Activated naive CD4-positive, alpha-beta T cell treated with anti-CD3 and anti-CD28 coated beads for 36 hours (primary cell): ENCODE measurements at regions of chr9 and their contacts with region 1.

Region 1: GRCh38 chr9:36190388-36191287 is at the start of gene CLTA:
- DNase-seq: peak; percentile 98
- H3K4me3 Mint-ChIP-seq: peak within 1 kb of the TSS; percentile 84
- H3K27ac Mint-ChIP-seq: peak within 1 kb of the TSS; percentile 84
- H3K4me1 Mint-ChIP-seq: peaks cover 42% of the 10 kb centered on the region
- H3K27me3 Mint-ChIP-seq: no peaks in the 10 kb centered on the region
- total RNA-seq, gene CLTA: 96.4 to 101 TPM

Region 2: DNA sequence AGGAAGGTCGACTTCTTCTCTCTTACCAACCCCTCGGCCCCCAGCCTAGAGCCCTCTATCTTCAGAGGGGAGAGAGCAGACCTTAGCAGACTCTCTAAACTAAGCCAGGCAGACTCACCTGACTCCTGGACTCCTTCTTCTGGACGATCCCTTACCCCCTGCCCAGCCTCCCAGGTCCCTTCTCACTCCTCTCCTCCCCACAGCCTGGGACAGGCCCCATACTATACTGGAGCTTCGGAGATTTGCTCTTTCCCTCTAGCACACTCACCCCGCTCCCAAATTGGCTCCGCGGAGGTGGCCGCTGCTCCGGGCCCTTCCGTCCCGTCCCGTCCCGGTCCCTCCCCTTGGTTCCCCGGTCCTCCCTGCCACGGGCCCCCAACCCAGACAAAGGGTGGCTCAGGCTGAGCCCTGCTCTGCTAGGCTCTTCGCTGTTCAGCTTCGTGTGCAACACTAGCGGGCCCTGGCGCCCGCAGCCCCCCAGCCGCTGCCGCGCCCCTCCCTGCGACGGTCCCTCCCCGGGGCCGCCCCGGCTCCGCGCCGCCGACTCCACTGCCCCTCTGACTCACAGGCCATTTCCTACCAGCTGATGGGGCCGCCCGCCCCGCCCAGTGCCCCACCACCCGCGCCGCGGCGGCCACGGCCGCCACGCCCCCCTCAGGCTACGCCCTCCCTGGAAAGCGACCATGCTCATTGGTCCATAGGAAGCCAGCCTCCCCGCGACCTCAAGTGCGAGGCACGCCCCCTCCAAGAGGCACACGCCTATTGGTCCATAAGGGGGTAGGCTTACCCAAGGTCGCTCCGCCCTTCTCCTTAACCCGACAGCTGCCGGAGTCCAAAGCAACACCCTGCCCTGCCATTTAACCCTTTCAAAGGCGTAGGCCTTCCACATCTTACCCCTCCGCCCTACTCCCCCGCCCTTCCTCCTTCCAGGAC is 1079.4 kb before region 1 on chr9:
- CTCF ChIA-PET with region 1: no interaction called
- intact Hi-C with region 1: loop called (anchors 2 kb)
- DNase-seq: peak; percentile 97
- H3K4me3 Mint-ChIP-seq: peak overlapping the region; percentile 56
- H3K27ac Mint-ChIP-seq: peak overlapping the region; percentile 88
- H3K4me1 Mint-ChIP-seq: peaks cover 44% of the 10 kb centered on the region
- H3K27me3 Mint-ChIP-seq: no peaks in the 10 kb centered on the region

Region 3: GRCh38 chr9:36036780-36037548 is 153.7 kb before region 1 on chr9 and contains the start of gene RECK:
- CTCF ChIA-PET with region 1: interaction called, 3 read pairs
- intact Hi-C with region 1: loop called (anchors 2 kb)
- DNase-seq: peak; percentile 88
- H3K4me3 Mint-ChIP-seq: peak within 1 kb of the TSS; percentile 93
- H3K27ac Mint-ChIP-seq: peak within 1 kb of the TSS; percentile 67
- H3K4me1 Mint-ChIP-seq: peaks cover 39% of the 10 kb centered on the region
- H3K27me3 Mint-ChIP-seq: no peaks in the 10 kb centered on the region
- total RNA-seq, gene RECK: 7.8 to 8.5 TPM

Region 4: GRCh38 chr9:36148311-36149051 is 42.2 kb before region 1 on chr9:
- CTCF ChIA-PET with region 1: interaction called, 6 read pairs
- intact Hi-C with region 1: loop called (anchors 1 kb)
- DNase-seq: peak; percentile 69
- H3K4me3 Mint-ChIP-seq: no peak overlapping the region
- H3K27ac Mint-ChIP-seq: no peak overlapping the region
- H3K4me1 Mint-ChIP-seq: peaks cover 82% of the 10 kb centered on the region
- H3K27me3 Mint-ChIP-seq: no peaks in the 10 kb centered on the region

Region 5: GRCh38 chr9:36258208-36258988 is 67.8 kb after region 1 on chr9 and contains the start of gene GNE:
- CTCF ChIA-PET with region 1: no interaction called
- intact Hi-C with region 1: loop called (anchors 1 kb)
- DNase-seq: peak; percentile 97
- H3K4me3 Mint-ChIP-seq: peak within 1 kb of the TSS; percentile 93
- H3K27ac Mint-ChIP-seq: peak within 1 kb of the TSS; percentile 81
- H3K4me1 Mint-ChIP-seq: peaks cover 14% of the 10 kb centered on the region
- H3K27me3 Mint-ChIP-seq: no peaks in the 10 kb centered on the region
- total RNA-seq, gene GNE: 14.5 to 15.2 TPM

Region 6: DNA sequence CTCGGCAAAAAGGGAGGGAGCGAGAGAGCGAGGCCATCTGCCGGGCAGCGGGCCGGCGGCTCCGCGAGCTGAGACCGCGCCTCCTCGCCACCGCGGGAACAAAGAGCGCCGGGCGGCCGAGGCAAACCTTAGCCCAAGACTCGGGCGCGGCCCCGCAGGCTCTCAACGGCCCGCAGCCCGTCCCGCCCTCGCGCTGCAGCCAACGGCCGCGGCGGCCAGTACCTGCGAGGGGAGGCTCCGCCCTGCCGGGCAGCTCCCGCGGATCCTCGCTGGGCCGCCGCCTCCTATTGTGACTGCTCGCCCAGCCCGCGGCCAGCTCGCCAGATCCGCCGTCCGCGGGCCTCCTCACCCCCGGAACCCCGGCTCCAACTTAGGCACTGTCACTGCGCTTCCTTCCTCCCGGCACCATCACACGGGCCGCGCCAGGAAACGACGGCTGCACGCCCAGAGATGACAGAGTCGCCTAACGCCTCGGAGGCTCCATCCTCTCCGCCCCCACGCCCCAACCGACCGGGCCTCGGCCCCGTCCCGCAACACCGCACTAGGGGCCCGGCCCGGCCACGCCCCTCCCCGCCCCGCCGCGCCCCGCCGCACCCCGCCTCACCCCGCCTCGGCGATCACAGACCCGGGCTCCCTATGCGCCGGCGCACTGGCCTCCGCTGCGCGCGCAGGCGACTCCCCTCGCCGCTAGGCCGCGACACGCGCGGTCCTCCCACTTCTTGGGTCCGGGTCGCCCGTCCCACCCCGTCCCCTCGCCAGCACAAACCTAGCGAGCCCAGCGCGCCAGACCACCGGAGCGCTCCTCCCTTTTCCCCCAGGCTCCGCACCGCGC is 209.9 kb after region 1 on chr9:
- CTCF ChIA-PET with region 1: no interaction called
- intact Hi-C with region 1: loop called (anchors 1 kb)
- DNase-seq: peak; percentile 90
- H3K4me3 Mint-ChIP-seq: peak overlapping the region; percentile 86
- H3K27ac Mint-ChIP-seq: peak overlapping the region; percentile 95
- H3K4me1 Mint-ChIP-seq: peaks cover 37% of the 10 kb centered on the region
- H3K27me3 Mint-ChIP-seq: no peaks in the 10 kb centered on the region

Region 7: GRCh38 chr9:36728651-36729520 is 538.2 kb after region 1 on chr9:
- CTCF ChIA-PET with region 1: interaction called, 7 read pairs
- intact Hi-C with region 1: loop called (anchors 1 kb)
- DNase-seq: peak; percentile 83
- H3K4me3 Mint-ChIP-seq: no peak overlapping the region
- H3K27ac Mint-ChIP-seq: no peak overlapping the region
- H3K4me1 Mint-ChIP-seq: no peaks in the 10 kb centered on the region
- H3K27me3 Mint-ChIP-seq: no peaks in the 10 kb centered on the region